Vagina (tissue), 2 donors: ENCODE measurements at regions of chr13 and their contacts with region 1.

Region 1: GRCh38 chr13:36736119-36736726 is 62.4 kb downstream of the SERTM1 start:
- DNase-seq: no peak
- H3K4me3 ChIP-seq: no peak overlapping the region
- H3K27ac ChIP-seq: no peak overlapping the region
- H3K4me1 ChIP-seq: no peaks in the 10 kb centered on the region
- H3K27me3 ChIP-seq: no peaks in the 10 kb centered on the region
- CTCF ChIP-seq: peak in 2 of 3 experiments; percentile 71
- POLR2A ChIP-seq: no peak

Region 2: GRCh38 chr13:36420437-36420891 is 315.8 kb before region 1 on chr13:
- intact Hi-C with region 1: loop called (anchors 10 kb)
- DNase-seq: no peak
- H3K4me3 ChIP-seq: no peak overlapping the region
- H3K27ac ChIP-seq: no peak overlapping the region
- H3K4me1 ChIP-seq: no peaks in the 10 kb centered on the region
- H3K27me3 ChIP-seq: no peaks in the 10 kb centered on the region
- CTCF ChIP-seq: peak; percentile 65 to 83 (median 82)
- POLR2A ChIP-seq: no peak

Region 3: GRCh38 chr13:36862002-36862685 is 125.9 kb after region 1 on chr13:
- intact Hi-C with region 1: no loop called
- DNase-seq: no peak
- H3K4me3 ChIP-seq: no peak overlapping the region
- H3K27ac ChIP-seq: no peak overlapping the region
- H3K4me1 ChIP-seq: no peaks in the 10 kb centered on the region
- H3K27me3 ChIP-seq: no peaks in the 10 kb centered on the region
- CTCF ChIP-seq: no peak
- POLR2A ChIP-seq: no peak